Vagina (tissue), 2 donors: ENCODE measurements at regions of chr14 and their contacts with region 1.

Region 1: DNA sequence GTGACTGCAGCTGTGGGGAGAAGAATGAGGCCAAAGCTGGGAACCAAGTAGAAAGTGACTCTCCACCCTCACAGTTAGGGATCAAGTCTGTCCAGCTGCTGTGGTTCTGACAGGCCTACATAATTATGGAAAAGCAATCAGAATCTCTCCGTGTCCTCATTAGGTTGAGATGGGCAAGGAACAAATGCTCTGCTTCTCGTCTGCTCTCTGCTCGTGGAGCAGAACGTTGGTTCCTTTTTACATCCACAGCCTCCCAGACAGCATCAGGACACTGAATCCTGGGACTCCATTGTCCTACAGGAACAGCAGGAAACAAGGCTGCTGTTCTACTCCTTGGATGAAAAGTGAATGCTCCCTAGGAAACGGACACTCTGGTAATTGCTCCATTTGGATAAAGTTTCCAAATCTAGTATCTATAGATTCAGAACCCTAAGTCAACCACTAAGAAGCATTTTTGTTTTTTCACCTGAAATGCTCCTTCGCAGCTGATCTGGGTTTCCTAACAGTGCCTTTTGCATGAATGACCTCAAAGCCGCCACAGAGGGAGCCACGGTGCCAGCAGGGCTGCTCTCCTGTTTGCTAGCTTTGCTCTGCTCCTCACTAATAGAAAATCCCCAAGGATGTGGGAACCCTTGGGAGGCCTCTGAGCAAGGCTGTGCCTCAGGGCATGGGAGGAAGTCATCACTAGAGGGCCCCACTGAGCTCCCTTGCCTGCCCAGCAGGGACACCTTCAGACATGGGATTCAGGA is 102.0 kb downstream of the EGLN3 start:
- DNase-seq: peak in 1 of 2 donors; percentile 77
- H3K4me3 ChIP-seq: no peak overlapping the region
- H3K27ac ChIP-seq: no peak overlapping the region
- H3K4me1 ChIP-seq: no peaks in the 10 kb centered on the region
- H3K27me3 ChIP-seq: no peaks in the 10 kb centered on the region
- CTCF ChIP-seq: no peak
- POLR2A ChIP-seq: no peak

Region 2: DNA sequence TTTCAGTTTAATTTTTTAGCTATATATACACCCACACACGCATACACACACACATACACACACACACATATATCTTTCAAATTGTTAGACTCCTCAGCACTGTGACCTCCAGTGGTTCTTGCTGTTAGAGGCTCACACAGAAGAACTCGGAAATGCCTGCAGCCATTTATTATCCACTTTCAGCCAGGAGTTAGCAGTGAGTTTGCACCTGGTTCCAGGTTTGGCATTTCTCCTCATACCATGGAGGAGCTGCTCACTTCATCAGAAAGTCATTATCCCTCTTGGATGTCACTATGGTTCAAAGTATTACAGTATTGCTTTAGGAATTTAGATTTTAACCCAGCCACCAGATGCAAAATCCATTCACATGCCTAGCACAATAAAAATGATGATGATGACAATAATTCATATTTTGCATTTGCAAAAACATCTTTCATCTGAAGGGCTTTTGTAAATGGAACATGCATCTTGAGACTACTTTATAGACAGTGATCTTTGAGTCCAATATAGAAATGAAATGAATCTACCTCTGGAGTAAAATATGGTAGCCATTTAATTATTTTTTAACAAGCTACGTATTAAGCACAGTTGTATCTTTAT is 867.9 kb before region 1 on chr14:
- intact Hi-C with region 1: no loop called
- DNase-seq: no peak
- H3K4me3 ChIP-seq: no peak overlapping the region
- H3K27ac ChIP-seq: no peak overlapping the region
- H3K4me1 ChIP-seq: no peaks in the 10 kb centered on the region
- H3K27me3 ChIP-seq: no peaks in the 10 kb centered on the region
- CTCF ChIP-seq: no peak
- POLR2A ChIP-seq: no peak

Region 3: GRCh38 chr14:33792720-33793368 is 56.0 kb before region 1 on chr14:
- intact Hi-C with region 1: no loop called
- DNase-seq: no peak
- H3K4me3 ChIP-seq: peak overlapping the region; percentile 12 to 30
- H3K27ac ChIP-seq: no peak overlapping the region
- H3K4me1 ChIP-seq: peaks cover 12% of the 10 kb centered on the region
- H3K27me3 ChIP-seq: no peaks in the 10 kb centered on the region
- CTCF ChIP-seq: peak; percentile 77 to 94 (median 86)
- POLR2A ChIP-seq: no peak

Region 4: DNA sequence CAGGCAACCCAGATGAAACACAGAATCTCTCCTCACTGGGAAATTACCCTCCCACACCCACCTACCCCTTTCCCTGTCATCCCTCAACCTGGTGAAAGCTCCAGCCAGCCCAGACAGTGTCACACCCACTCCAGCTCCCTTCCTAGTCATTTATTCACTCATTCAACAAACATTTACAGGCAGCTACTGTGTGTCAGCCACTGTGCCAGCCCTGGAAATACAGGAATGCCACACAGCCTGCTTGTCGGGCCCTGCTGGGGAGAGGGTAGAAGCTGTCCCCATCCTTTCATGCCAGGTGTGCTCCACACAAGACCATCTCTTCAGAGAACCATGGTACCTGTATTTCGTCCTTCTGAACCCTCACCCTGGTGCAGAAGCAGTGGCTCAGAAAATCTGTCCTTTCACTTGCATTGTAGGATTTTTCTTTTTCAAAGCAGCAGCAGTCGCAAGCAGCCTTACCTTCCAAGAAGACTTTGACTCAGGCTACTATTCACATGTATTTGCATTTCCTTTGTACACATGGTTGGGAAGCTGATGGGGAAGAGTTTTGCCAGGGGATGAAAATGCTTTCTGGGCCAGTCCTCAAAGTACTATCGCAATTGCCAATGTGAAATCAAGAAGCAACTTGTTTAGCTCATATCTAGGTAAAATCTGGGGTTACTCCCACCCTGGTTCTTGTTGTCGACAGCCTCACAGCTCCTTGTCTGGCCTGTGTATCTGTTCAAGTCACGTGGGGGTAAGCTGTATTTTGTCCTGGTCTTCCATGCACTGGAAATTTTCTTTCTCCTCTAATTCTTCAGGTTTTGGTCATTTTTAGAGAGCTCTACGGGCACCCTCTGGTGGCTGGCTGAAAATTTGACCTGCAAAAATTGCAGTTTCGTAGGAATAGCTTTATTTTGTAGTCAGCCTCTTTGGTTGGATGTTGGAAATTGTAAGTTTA is 249.4 kb after region 1 on chr14:
- intact Hi-C with region 1: loop called (anchors 5 kb)
- DNase-seq: no peak
- H3K4me3 ChIP-seq: no peak overlapping the region
- H3K27ac ChIP-seq: no peak overlapping the region
- H3K4me1 ChIP-seq: peaks cover 5% of the 10 kb centered on the region
- H3K27me3 ChIP-seq: no peaks in the 10 kb centered on the region
- CTCF ChIP-seq: peak in 2 of 3 experiments; percentile 64 to 68
- POLR2A ChIP-seq: no peak